ENCODE measurements at regions of chr15 and their contacts with region 1.

Region 1: GRCh38 chr15:70679919-70680231 is 83.5 kb downstream of the UACA start:
- DNase-seq: no peak
- H3K4me3 ChIP-seq: no peak overlapping the region
- H3K27ac ChIP-seq: peak overlapping the region in 1 of 2 donors; percentile 9
- H3K4me1 ChIP-seq: peaks cover 0 to 27% (median 3%) of the 10 kb centered on the region in 4 donors
- H3K27me3 ChIP-seq: no peaks in the 10 kb centered on the region
- CTCF ChIP-seq: no peak

Region 2: GRCh38 chr15:70810916-70811578 is 131.2 kb after region 1 on chr15:
- intact Hi-C with region 1: loop called (anchors 5 kb)
- DNase-seq: no peak
- H3K4me3 ChIP-seq: no peak overlapping the region
- H3K27ac ChIP-seq: no peak overlapping the region
- H3K4me1 ChIP-seq: peaks cover 0 to 45% (median 32%) of the 10 kb centered on the region in 4 donors
- H3K27me3 ChIP-seq: no peaks in the 10 kb centered on the region
- CTCF ChIP-seq: no peak